Heart right ventricle (tissue), 16 donors: ENCODE measurements at regions of chr17 and their contacts with region 1.

Region 1: DNA sequence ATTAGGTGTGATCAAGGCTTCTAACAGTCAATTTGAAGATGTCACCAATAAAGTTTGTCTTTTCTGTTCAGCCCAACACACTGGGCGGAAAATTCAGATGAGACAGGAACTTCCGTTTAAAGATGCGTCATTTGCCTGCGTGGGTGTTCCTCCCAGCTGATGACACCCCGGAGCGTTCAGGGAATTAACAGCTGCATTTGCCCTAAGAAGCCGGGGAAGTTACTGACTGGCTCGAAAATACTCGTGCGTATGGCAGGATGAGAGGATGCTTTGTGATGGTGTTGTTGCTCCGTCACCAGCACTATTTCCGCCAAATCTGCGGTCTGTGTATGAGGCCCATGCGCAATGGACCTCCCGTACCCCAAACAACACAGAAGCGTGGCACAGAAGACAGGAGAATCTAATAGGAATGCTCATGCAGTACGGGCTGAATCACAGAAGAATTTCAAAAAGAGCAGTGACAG is 11.9 kb upstream of the PVALEF start:
- DNase-seq: peak in 1 of 2 donors; percentile 35
- ATAC-seq: peak in 6 of 8 donors; percentile 18 to 70 (median 46)
- H3K4me3 ChIP-seq: no peak overlapping the region
- H3K27ac ChIP-seq: peak overlapping the region in 2 of 10 donors; percentile 28 to 82
- H3K4me1 ChIP-seq: peaks cover 0 to 41% (median 0%) of the 10 kb centered on the region in 9 donors
- H3K27me3 ChIP-seq: no peaks in the 10 kb centered on the region
- CTCF ChIP-seq: no peak

Region 2: DNA sequence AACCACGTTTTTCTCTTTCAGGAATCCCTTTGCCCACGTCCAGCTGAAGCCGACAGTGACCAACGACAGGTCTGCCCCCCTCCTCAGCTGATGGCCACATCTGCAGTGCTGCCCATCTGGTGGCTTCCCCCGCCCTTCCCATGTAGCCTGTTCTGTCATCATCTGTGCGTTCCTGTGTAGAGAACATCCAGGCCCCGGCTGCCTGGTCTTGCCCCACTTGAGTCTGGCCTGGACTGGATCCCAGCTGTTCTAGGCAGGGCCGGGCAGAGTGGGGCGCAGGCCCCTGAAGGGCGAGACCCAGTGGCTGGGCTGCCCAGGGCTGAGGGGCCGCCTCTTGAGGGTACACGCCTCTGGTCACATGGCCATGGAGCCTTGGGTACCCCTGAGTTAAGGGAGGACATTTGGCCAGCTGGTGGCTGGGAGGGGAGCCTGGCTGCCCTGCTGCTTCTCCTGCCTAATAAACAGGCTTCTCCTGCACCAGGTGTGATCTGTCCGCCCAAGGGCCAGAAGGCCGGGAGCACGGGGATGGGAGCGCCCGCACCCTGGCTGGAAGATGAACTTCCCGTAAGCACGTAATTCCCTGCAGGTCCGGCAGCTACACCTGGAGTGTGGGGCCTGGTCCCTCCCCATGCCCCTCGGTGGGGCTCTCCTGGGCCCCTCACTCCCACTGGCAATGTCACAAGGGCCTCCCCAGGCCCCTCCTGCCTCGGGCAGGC is 37.5 kb before region 1 on chr17:
- intact Hi-C with region 1: no loop called
- DNase-seq: peak in 1 of 2 donors; percentile 41
- ATAC-seq: peak; percentile 23 to 81 (median 52)
- H3K4me3 ChIP-seq: no peak overlapping the region
- H3K27ac ChIP-seq: no peak overlapping the region
- H3K4me1 ChIP-seq: peaks cover 0 to 21% (median 11%) of the 10 kb centered on the region in 9 donors
- H3K27me3 ChIP-seq: peaks cover 0 to 21% (median 0%) of the 10 kb centered on the region in 7 donors
- CTCF ChIP-seq: no peak

Region 3: GRCh38 chr17:81194941-81195901 is 41.8 kb after region 1 on chr17:
- intact Hi-C with region 1: loop called in 4 of 10 experiments (anchors 5 to 10 kb)
- DNase-seq: peak; percentile 58 to 72
- ATAC-seq: peak; percentile 50 to 92 (median 76)
- H3K4me3 ChIP-seq: no peak overlapping the region
- H3K27ac ChIP-seq: peak overlapping the region in 8 of 10 donors; percentile 19 to 75 (median 64)
- H3K4me1 ChIP-seq: peaks cover 0 to 44% (median 20%) of the 10 kb centered on the region in 9 donors
- H3K27me3 ChIP-seq: no peaks in the 10 kb centered on the region
- CTCF ChIP-seq: no peak